ENCODE measurements at regions of chr12 and their contacts with region 1.

Region 1: GRCh38 chr12:7933255-7933729 is 2.7 kb downstream of the SLC2A3 start:
- DNase-seq: peak; percentile 82
- ATAC-seq: peak; percentile 94

Region 2: GRCh38 chr12:7959701-7960121 is 26.4 kb after region 1 on chr12:
- intact Hi-C with region 1: loop called (anchors 1 kb)
- DNase-seq: no peak
- ATAC-seq: no peak

Region 3: DNA sequence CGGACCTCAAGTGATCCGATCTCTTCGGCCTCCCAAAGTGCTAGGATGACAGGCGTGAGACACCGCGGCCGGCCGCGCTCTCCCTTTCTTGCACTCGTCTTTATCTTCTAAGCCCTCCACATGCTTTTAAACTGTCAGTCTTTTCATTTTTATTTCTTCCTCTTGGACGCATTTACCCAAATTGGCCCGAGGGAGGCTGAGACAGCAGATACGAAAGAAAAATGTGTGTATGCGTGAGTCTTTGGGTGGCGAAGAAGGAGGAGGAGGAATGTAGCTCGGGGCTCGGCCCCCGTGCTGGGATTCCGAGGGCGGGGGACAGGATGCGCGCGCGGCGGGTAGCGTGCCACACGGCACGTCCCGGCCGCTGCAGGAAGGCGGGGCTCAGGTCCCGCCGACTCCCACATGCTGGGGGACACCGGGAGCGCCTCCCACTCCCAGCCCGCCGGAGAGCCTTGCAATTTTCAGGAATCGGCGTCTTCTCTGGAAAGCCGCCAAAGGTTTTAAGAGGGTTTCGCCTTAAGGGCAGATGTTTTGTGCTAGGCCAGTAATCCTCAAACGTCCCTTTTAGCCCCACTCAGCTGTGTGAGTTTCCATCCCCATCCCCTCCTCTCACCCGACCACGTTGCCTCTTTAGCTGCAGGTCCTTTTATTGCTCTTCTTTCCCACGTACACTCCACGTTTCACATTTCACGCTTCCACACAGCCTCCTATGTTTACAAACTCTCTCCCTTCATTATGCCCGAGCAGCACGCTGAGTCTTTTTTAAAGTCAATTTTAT is 37.4 kb after region 1 on chr12:
- intact Hi-C with region 1: loop called (anchors 5 kb)
- DNase-seq: peak; percentile 97
- ATAC-seq: peak; percentile 98

Region 4: GRCh38 chr12:7995266-7995963 is 62.1 kb after region 1 on chr12:
- intact Hi-C with region 1: loop called (anchors 2 kb)
- DNase-seq: peak; percentile 84
- ATAC-seq: peak; percentile 99

Measured in Right ventricle myocardium inferior (tissue), 1 donor.